Activated CD4-positive, alpha-beta memory T cell treated with anti-CD3 and anti-CD28 coated beads, Interleukin-2, amount 10 ng/mL, durations not matched to agents 7 days and 5 days (primary cell): ENCODE measurements at regions of chr16 and their contacts with region 1.

Region 1: DNA sequence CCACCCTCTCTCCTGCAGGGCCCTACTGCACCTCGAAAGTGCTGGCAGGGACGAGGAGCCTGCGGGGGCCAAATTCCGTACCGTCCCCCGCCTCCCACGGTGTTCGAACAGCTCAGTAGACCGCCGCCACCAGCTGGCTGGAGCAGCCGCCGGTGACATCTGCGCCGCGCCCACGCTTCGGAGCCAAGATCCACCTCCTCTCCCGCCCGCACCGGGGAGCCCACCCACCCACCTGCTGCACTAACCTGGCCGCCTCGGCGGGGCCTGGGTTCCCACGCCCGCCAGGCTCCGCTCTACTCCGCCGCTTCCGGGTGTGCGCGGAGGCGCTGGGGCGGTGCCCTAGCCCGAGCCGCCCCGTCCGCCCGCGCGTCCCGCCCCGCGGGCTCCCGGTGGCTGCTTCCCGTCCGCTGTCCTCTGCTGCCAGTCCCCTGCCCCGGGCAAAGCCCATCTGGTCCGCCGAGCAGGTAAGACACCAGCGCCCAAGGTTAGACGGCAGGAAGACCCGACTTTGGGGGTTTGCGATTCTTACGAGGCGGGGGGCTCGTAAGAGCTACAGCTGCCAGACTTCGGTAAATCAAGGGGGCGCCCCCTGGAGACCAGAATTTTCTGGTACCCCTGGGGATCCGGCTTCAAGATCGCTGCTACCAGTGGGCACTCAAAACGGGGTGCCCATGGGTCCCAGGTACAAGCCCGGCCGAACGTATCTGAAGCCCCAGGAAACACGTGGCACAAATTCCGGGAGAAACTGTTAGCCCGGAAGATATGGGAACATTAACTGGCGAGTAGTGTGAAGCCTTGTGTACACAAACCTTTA is at the starts of genes FBXL8 and TRADD:
- DNase-seq: peak; percentile 86
- H3K4me3 Mint-ChIP-seq: peak within 1 kb of the TSS; percentile 96
- H3K27ac Mint-ChIP-seq: peak within 1 kb of the TSS; percentile 98
- H3K4me1 Mint-ChIP-seq: peaks cover 65% of the 10 kb centered on the region
- H3K27me3 Mint-ChIP-seq: peaks cover 8% of the 10 kb centered on the region
- total RNA-seq, gene FBXL8: 52.3 to 54.4 TPM
- total RNA-seq, gene TRADD: 96.9 to 97.3 TPM

Region 2: DNA sequence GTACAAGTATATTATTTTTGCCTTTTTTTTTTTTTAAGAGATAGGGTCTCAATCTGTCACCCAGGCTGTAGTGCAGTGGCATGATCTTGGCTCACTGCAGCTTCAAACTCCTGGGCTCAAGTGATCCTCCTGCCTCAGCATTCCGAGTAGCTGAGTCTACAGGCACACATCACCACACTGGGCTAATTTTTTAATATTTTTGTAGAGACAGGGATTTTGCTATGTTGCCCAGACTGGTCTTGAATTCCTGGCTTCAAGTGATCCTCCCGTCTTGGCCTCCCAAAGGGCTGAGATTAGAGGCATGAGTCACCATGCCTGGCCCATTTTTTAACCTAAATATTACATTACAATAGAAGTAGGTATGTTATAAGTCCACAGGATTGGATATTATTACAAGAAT is 361.6 kb before region 1 on chr16:
- CTCF ChIA-PET with region 1: no interaction called
- POLR2A ChIA-PET with region 1: no interaction called
- DNase-seq: no peak
- H3K4me3 Mint-ChIP-seq: no peak overlapping the region
- H3K27ac Mint-ChIP-seq: no peak overlapping the region
- H3K4me1 Mint-ChIP-seq: no peaks in the 10 kb centered on the region
- H3K27me3 Mint-ChIP-seq: no peaks in the 10 kb centered on the region

Region 3: DNA sequence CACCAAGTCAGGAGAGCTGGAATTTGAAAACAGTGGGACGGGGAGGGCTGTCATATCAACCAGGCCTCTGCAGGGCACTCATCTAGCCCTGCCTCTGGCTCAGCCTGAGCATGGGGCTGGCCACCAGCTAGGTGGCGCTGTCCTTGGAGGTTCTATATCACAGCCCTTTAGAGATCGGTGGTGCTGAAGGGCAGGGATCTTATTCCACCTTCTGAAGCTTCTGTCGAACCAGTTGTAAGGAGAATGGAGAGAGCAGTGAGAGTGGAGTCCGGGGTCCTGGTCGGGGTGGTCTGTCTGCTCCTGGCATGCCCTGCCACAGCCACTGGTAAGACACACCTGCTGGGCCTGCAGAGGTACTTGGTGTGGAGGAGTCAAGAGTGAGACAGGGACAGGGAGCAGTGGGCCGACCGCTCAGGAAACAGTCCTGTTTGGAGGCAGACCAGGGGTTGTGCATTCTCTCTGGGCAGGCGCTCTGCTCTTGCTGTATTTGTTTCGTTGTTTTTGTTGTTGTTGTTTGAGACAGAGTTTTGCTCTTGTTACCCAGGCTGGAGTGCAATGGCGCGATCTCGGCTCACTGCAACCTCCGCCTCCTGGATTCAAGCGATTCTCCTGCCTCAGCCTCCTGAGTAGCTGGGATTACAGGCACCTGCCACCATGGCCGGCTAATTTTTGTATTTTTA is 198.6 kb before region 1 on chr16 and contains the start of gene CES3:
- CTCF ChIA-PET with region 1: interaction called, 20 read pairs
- POLR2A ChIA-PET with region 1: no interaction called
- DNase-seq: peak; percentile 81
- H3K4me3 Mint-ChIP-seq: peak within 1 kb of the TSS; percentile 71
- H3K27ac Mint-ChIP-seq: peak within 1 kb of the TSS; percentile 57
- H3K4me1 Mint-ChIP-seq: peaks cover 44% of the 10 kb centered on the region
- H3K27me3 Mint-ChIP-seq: peaks cover 2% of the 10 kb centered on the region
- total RNA-seq, gene CES3: 6.1 to 6.3 TPM

Region 4: DNA sequence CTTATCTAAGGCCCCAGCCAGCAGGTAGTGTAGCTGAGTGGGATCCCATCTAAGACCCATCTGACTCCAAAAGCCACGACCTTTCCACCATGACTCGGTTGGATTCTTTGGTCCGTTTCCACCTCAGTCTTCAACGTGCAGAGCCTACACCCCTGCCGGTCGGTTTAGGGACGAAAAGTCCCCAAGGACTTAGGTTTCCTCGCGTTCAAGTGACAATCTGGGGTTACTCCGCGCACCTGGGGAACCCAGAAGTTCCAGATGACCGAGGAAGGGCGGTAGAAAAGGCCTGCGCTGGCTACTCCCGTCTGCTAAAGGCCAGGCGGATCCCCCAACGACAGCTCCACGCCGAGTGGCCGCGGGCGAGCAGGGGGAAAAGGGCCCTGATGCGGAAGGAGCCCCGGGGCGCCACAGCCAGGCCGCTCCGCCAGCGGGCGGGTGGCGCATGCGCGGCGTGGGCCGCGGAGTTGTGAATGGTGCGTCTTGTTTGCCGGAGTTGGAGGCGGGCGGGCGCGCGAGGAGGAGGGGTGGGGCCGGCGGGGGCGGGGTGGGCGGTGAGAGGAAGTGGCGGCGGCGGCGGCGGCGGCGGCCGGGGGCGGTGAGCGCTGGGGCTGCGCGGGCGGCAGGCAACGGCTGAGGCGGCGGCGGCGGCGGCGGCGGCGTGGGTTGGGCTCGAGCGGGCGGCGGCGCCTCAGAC is 131.1 kb before region 1 on chr16 and contains the start of gene CBFB:
- CTCF ChIA-PET with region 1: interaction called, 152 read pairs
- POLR2A ChIA-PET with region 1: interaction called, 32 read pairs
- DNase-seq: peak; percentile 94
- H3K4me3 Mint-ChIP-seq: peak within 1 kb of the TSS; percentile 93
- H3K27ac Mint-ChIP-seq: peak within 1 kb of the TSS; percentile 92
- H3K4me1 Mint-ChIP-seq: peaks cover 61% of the 10 kb centered on the region
- H3K27me3 Mint-ChIP-seq: no peaks in the 10 kb centered on the region
- total RNA-seq, gene CBFB: 236 to 238 TPM

Region 5: GRCh38 chr16:67137605-67138004 is 22.2 kb before region 1 on chr16:
- CTCF ChIA-PET with region 1: interaction called, 19 read pairs
- POLR2A ChIA-PET with region 1: interaction called, 10 read pairs
- DNase-seq: no peak
- H3K4me3 Mint-ChIP-seq: no peak overlapping the region
- H3K27ac Mint-ChIP-seq: no peak overlapping the region
- H3K4me1 Mint-ChIP-seq: no peaks in the 10 kb centered on the region
- H3K27me3 Mint-ChIP-seq: no peaks in the 10 kb centered on the region

Region 6: DNA sequence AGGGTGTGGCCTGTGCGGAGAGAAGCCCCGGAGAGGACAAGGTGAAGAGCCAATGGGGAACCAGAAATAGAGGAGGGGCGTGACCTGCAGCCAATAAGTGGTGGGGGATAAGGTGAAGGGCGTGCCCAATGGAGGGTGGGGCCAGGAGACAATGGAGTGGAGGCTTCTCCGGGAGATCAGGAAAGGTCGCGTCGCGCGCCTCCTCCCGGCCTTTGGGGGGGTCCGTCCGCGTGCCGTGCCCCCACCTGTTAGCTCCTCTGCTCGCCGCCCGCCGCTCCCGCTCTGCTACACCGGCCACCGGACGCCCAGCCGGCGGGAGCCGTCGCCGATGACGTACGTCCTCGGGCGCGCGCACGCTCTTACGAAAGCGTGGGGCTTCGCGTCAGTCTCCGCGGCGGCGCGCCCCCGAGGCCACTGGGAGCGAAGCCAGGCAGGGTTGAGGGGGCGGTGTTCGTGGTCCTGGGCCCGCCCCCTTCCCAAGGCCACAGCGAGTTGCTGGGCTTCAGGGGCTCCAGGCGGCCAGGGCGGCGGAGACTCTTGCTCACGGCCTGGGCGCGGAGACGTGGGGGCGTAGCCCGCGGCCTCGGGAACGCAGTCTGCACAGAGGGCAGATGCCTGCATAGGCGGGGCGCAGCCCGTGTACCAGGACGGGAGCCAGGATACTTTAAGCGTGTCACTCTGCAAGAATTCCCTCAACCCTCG is 24.0 kb after region 1 on chr16 and contains the start of gene MATCAP1:
- CTCF ChIA-PET with region 1: interaction called, 56 read pairs
- POLR2A ChIA-PET with region 1: interaction called, 204 read pairs
- DNase-seq: peak; percentile 96
- H3K4me3 Mint-ChIP-seq: peak within 1 kb of the TSS; percentile 78
- H3K27ac Mint-ChIP-seq: no peak within 1 kb of the TSS
- H3K4me1 Mint-ChIP-seq: peaks cover 24% of the 10 kb centered on the region
- H3K27me3 Mint-ChIP-seq: peaks cover 10% of the 10 kb centered on the region
- total RNA-seq, gene MATCAP1: 63.9 to 70.9 TPM

Region 7: GRCh38 chr16:67301080-67301782 is 141.4 kb after region 1 on chr16:
- CTCF ChIA-PET with region 1: no interaction called
- POLR2A ChIA-PET with region 1: no interaction called
- DNase-seq: no peak
- H3K4me3 Mint-ChIP-seq: no peak overlapping the region
- H3K27ac Mint-ChIP-seq: no peak overlapping the region
- H3K4me1 Mint-ChIP-seq: no peaks in the 10 kb centered on the region
- H3K27me3 Mint-ChIP-seq: peaks cover 6% of the 10 kb centered on the region